ENCODE measurements at regions of chr6 and their contacts with region 1.

Region 1: DNA sequence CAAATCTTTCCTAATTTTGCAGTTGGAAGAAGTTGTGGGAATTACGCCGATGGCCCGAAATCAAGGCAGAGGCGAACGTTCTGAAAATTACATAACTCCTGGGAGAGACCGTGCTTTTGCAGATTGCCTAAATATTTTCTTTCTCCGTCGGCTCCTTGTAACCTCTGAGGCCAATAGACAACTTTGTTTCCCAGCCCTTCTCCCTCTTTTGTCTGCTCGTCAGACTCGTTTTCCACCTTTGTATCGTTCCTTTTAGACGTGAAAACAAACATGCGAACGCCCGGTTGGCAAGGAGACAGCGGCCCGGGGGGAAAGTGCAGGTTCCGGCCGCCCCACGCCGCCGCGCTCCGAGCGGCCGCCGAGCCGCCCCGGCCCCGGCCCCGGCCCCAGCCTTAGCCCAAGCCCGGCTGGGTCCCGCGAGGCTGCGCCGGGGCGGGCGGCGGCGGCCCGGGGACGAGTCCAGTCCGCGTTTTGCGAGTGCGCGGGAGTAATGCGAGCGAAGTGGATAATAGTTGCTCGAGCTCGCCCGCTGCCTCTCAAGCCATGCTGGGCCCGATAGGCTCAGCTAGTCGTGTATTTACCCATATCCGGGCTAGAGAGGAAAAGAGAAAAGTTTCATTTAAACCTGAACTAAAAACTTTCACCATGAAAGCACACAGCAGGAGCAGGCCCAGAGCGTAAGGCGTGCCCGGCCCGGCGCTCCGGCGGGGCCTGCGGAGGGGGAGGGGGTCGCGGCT is at the start of gene ARID1B:
- DNase-seq: peak; percentile 74
- H3K4me3 ChIP-seq: peak within 1 kb of the TSS; percentile 72 to 87
- H3K27ac ChIP-seq: peak within 1 kb of the TSS; percentile 99 to 100
- H3K4me1 ChIP-seq: no peaks in the 10 kb centered on the region
- H3K27me3 ChIP-seq: no peaks in the 10 kb centered on the region
- CTCF ChIP-seq: no peak
- POLR2A ChIP-seq: no peak
- total RNA-seq, gene ARID1B: 103 to 126 TPM

Region 2: GRCh38 chr6:156348424-156348823 is 428.6 kb before region 1 on chr6:
- intact Hi-C with region 1: no loop called
- DNase-seq: no peak
- H3K4me3 ChIP-seq: no peak overlapping the region
- H3K27ac ChIP-seq: no peak overlapping the region
- H3K4me1 ChIP-seq: no peaks in the 10 kb centered on the region
- H3K27me3 ChIP-seq: no peaks in the 10 kb centered on the region
- CTCF ChIP-seq: no peak
- POLR2A ChIP-seq: no peak

Region 3: GRCh38 chr6:156474507-156475120 is 302.4 kb before region 1 on chr6:
- intact Hi-C with region 1: no loop called
- DNase-seq: no peak
- H3K4me3 ChIP-seq: no peak overlapping the region
- H3K27ac ChIP-seq: no peak overlapping the region
- H3K4me1 ChIP-seq: no peaks in the 10 kb centered on the region
- H3K27me3 ChIP-seq: no peaks in the 10 kb centered on the region
- CTCF ChIP-seq: no peak
- POLR2A ChIP-seq: no peak

Region 4: DNA sequence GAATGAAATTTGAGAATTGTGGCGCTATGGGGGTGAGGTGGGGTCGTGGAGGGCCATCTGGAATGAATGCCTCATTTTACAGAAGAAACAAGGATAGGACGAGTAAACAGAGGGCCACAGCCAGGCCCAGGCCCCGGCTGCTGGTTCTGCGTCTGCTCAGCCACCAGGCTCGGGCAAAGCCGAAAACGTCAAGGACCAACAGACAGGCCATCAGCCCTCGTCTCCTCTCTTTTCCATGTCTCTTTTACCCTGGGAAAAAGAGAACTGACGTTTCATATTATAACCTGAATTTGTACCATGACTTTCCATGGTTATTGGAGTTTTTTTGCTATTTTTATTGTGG is 212.2 kb before region 1 on chr6:
- intact Hi-C with region 1: loop called (anchors 5 kb)
- DNase-seq: no peak
- H3K4me3 ChIP-seq: no peak overlapping the region
- H3K27ac ChIP-seq: no peak overlapping the region
- H3K4me1 ChIP-seq: no peaks in the 10 kb centered on the region
- H3K27me3 ChIP-seq: no peaks in the 10 kb centered on the region
- CTCF ChIP-seq: no peak
- POLR2A ChIP-seq: no peak

Region 5: DNA sequence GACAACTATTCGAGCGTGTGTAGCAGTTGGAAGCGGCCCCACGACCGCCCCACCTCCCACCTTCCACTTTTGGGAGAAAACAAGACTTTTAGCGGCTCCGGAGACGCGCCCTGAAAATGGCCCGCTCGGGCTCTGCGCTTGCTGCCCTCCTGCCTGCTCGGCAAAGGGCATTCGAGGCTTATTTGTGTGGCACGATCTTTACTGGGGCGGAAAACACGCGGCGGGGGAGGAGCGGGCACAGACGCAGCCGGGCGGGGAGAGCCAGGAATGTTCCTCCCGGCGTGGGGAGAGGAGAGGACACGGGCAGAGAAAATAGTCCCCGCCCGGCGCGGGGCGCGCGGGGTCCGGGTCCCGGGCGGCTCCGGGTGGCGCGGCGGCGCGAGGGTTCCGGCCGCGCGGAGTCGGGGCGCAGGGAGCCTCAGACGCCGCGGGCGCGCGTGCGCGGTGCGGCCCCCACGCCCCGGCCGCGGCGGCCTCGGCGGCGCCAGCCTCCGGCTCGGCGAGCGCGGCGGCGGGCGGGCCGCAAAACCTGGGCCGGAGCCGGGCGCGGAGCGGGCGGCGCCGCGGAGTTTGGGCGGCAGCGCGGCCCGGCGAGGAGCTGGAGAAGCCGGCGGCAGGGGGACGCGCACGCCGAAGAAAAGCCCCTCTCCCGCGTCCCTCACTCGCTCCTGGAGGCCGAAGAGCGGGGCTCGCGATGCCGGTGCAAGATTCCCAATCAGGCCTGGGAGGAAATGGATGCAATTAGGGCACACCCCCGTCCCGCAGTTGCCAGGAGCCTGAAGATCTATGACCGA is 89.8 kb before region 1 on chr6:
- intact Hi-C with region 1: loop called (anchors 5 kb)
- DNase-seq: peak; percentile 86
- H3K4me3 ChIP-seq: peak overlapping the region; percentile 74 to 81
- H3K27ac ChIP-seq: peak overlapping the region; percentile 97 to 99
- H3K4me1 ChIP-seq: peaks cover 4% of the 10 kb centered on the region
- H3K27me3 ChIP-seq: no peaks in the 10 kb centered on the region
- CTCF ChIP-seq: peak in 1 of 3 experiments; percentile 6
- POLR2A ChIP-seq: peak; percentile 22

Region 6: DNA sequence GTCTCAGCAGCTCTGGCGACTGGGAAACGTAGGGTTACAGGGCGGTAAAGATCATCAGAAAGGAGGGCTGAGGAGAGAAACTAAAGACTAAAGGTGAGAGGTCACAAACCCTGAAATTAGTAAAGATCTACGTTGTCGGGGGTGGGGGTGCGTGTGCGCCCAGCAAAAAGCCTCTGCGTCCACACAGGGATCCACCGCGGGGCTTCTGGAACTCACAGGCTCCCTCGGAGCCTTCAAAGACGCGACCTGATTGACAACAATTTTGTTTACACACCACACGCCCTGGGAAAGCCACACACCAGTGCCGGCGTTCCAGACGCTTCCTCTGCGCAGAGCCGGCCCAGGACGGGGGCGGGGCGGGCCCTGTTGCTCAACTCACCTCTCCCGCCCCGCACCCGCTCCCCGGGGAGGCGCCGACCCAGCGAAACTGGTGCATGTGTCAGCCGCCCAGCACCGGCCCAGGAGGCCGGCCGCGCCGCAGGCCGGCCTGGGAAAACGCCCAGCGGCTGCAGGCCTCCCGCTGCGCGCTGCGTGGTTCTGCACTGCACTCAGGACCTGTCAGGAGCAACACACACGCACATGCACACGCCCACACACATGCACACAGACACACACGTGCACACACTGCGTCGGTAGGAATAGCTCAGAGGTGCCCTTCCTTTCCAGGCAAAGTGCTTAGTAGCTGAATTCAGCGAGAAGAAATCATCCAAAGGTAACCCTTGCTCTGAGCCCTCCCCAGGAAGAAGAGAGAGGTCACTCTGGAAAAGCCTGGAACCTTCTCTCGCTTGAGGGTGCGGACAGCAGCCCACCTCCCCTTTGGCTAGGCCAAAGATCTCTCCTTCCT is 57.1 kb before region 1 on chr6:
- intact Hi-C with region 1: loop called (anchors 5 kb)
- DNase-seq: peak; percentile 94
- H3K4me3 ChIP-seq: peak overlapping the region; percentile 31 to 49
- H3K27ac ChIP-seq: peak overlapping the region; percentile 93 to 96
- H3K4me1 ChIP-seq: peaks cover 35% of the 10 kb centered on the region
- H3K27me3 ChIP-seq: no peaks in the 10 kb centered on the region
- CTCF ChIP-seq: no peak
- POLR2A ChIP-seq: no peak

Region 7: GRCh38 chr6:157021344-157021992 is 244.5 kb after region 1 on chr6:
- intact Hi-C with region 1: loop called (anchors 10 kb)
- DNase-seq: peak; percentile 91
- H3K4me3 ChIP-seq: peak overlapping the region; percentile 77 to 87
- H3K27ac ChIP-seq: peak overlapping the region; percentile 98 to 99
- H3K4me1 ChIP-seq: peaks cover 11% of the 10 kb centered on the region
- H3K27me3 ChIP-seq: no peaks in the 10 kb centered on the region
- CTCF ChIP-seq: peak; percentile 2 to 39 (median 17)
- POLR2A ChIP-seq: peak; percentile 73